ENCODE measurements at regions of chr5 and their contacts with region 1.

Region 1: GRCh38 chr5:172035039-172035438 is 28.6 kb upstream of the FBXW11 start:
- DNase-seq: no peak
- H3K4me3 ChIP-seq: no peak overlapping the region
- H3K27ac ChIP-seq: no peak overlapping the region
- H3K4me1 ChIP-seq: no peaks in the 10 kb centered on the region
- CTCF ChIP-seq: no peak

Region 2: GRCh38 chr5:171907725-171908343 is 127.2 kb before region 1 on chr5:
- CTCF ChIA-PET with region 1: no interaction called
- POLR2A ChIA-PET with region 1: no interaction called
- intact Hi-C with region 1: loop called (anchors 1 kb)
- DNase-seq: peak; percentile 68
- H3K4me3 ChIP-seq: no peak overlapping the region
- H3K27ac ChIP-seq: no peak overlapping the region
- H3K4me1 ChIP-seq: peaks cover 5% of the 10 kb centered on the region
- CTCF ChIP-seq: peak; percentile 97

Region 3: GRCh38 chr5:171953860-171954701 is 81.0 kb before region 1 on chr5:
- CTCF ChIA-PET with region 1: no interaction called
- POLR2A ChIA-PET with region 1: no interaction called
- intact Hi-C with region 1: no loop called
- DNase-seq: no peak
- H3K4me3 ChIP-seq: no peak overlapping the region
- H3K27ac ChIP-seq: no peak overlapping the region
- H3K4me1 ChIP-seq: no peaks in the 10 kb centered on the region
- CTCF ChIP-seq: no peak